Sigmoid colon (tissue), 7 donors: ENCODE measurements at regions of chr21 and their contacts with region 1.

Region 1: GRCh38 chr21:32782698-32783097 is 11.1 kb upstream of the PAXBP1 start:
- DNase-seq: no peak
- H3K4me3 ChIP-seq: no peak overlapping the region
- H3K27ac ChIP-seq: no peak overlapping the region
- H3K4me1 ChIP-seq: no peaks in the 10 kb centered on the region
- H3K27me3 ChIP-seq: no peaks in the 10 kb centered on the region
- CTCF ChIP-seq: peak in 1 of 4 experiments; percentile 17
- EP300 ChIP-seq: no peak
- POLR2A ChIP-seq: no peak

Region 2: DNA sequence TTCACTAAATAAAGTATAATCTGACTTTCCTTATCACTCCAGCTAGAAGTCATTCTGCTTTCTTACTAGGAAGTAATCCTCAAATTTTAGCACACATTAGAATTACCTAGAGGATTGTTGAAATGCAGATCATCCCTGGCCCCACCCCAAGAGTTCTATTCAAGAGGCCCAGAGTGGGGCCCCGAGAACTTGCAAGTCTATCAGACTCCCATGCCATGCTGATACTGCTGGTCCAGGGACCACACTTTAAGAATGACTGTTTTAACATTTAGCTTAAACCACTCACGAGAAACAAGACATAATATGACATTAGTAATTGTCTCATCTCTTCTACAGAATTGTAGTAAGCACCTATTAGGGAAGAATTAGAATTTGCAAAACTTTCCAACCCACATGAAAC is 47.2 kb before region 1 on chr21:
- intact Hi-C with region 1: no loop called
- DNase-seq: no peak
- H3K4me3 ChIP-seq: no peak overlapping the region
- H3K27ac ChIP-seq: no peak overlapping the region
- H3K4me1 ChIP-seq: no peaks in the 10 kb centered on the region
- H3K27me3 ChIP-seq: no peaks in the 10 kb centered on the region
- CTCF ChIP-seq: no peak
- EP300 ChIP-seq: no peak
- POLR2A ChIP-seq: no peak

Region 3: GRCh38 chr21:32826329-32827167 is 43.9 kb after region 1 on chr21:
- intact Hi-C with region 1: loop called (anchors 5 kb)
- DNase-seq: no peak
- H3K4me3 ChIP-seq: no peak overlapping the region
- H3K27ac ChIP-seq: no peak overlapping the region
- H3K4me1 ChIP-seq: no peaks in the 10 kb centered on the region
- H3K27me3 ChIP-seq: no peaks in the 10 kb centered on the region
- CTCF ChIP-seq: peak; percentile 21 to 59 (median 46)
- EP300 ChIP-seq: no peak
- POLR2A ChIP-seq: no peak